OCI-LY7 (cell line): ENCODE measurements at regions of chr3 and their contacts with region 1.

Region 1: GRCh38 chr3:196073188-196073838 is 8.6 kb downstream of the TFRC start:
- DNase-seq: peak; percentile 76
- H3K4me3 ChIP-seq: no peak overlapping the region
- H3K27ac ChIP-seq: no peak overlapping the region
- H3K4me1 ChIP-seq: no peaks in the 10 kb centered on the region
- CTCF ChIP-seq: peak; percentile 90

Region 2: DNA sequence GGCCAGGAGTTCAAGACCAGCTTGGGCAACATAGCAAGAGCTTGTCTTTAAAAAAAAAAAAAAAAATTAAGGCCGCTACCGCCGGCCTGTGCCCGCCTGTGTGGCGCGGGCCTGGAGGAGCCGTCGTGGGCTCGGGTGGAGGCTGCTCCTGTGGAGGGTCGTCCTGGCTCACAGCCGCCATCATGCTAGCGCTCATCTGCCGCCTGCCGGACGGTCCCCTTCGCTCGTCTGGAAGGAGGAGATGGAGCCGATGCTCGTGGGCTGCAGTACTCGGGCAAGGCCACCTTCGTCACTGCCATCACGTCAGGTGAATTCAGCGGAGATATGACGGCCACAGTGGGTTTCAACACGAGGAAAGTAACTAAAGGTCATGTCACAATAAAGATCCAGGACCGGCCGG is 28.8 kb before region 1 on chr3:
- CTCF ChIA-PET with region 1: no interaction called
- POLR2A ChIA-PET with region 1: no interaction called
- intact Hi-C with region 1: no loop called
- DNase-seq: no peak
- H3K4me3 ChIP-seq: no peak overlapping the region
- H3K27ac ChIP-seq: no peak overlapping the region
- H3K4me1 ChIP-seq: no peaks in the 10 kb centered on the region
- CTCF ChIP-seq: no peak

Region 3: GRCh38 chr3:196179380-196180308 is 106.3 kb after region 1 on chr3:
- CTCF ChIA-PET with region 1: interaction called, 5 read pairs
- POLR2A ChIA-PET with region 1: interaction called, 11 read pairs
- intact Hi-C with region 1: no loop called
- DNase-seq: peak; percentile 75
- H3K4me3 ChIP-seq: peak overlapping the region; percentile 5
- H3K27ac ChIP-seq: peak overlapping the region; percentile 53
- H3K4me1 ChIP-seq: peaks cover 21% of the 10 kb centered on the region
- CTCF ChIP-seq: peak; percentile 47; the same call in 1 of the 2 replicates

Region 4: DNA sequence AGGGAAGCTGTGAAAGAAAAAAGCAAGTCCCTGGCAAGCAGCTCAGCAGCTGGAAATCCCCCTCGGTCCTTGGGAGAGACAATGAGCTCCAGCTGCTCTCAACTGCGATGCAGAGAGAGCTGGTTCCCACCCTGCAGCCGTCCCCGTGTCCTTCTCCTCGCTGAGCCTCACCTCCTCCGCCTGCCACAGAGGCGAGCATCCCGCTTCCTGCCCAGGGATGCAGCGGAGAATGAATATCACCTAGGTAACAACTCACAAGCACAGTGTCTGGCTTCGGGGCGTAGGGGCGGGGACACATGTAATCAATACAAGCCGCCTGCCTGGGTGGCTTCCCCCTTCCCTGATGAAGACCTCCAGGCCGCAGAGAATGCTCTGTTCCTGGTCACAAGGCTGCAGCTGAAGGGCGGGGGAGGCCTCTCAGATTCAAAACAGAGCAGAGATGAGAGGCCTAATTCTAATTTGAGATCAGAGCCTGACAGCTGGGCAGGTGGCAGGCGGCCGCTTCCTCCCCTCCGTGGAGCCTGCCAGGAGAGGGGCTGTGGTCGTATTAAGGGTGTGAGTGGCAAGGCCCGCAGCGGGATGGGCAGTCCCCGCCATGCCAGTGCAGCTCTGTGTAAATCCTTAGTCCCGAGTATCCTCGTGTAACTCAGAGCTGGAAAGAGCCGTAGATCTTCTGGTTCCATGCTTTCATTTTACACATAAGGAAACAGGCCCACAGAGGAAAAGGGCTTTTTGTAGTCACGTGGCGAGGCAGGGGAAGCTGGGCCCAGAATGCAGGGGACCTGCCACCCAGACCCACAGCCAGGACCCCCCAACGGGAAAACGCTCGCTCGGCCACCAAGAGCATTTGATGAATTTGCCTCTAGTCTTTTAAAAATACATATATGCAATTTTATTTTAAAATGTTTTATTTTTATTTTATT is 113.6 kb after region 1 on chr3:
- CTCF ChIA-PET with region 1: interaction called, 5 read pairs
- POLR2A ChIA-PET with region 1: interaction called, 11 read pairs
- intact Hi-C with region 1: no loop called
- DNase-seq: peak; percentile 68
- H3K4me3 ChIP-seq: peak overlapping the region; percentile 50
- H3K27ac ChIP-seq: peak overlapping the region; percentile 43
- H3K4me1 ChIP-seq: peaks cover 15% of the 10 kb centered on the region
- CTCF ChIP-seq: no peak

Region 5: GRCh38 chr3:196195664-196196265 is 122.5 kb after region 1 on chr3:
- CTCF ChIA-PET with region 1: interaction called, 5 read pairs
- POLR2A ChIA-PET with region 1: no interaction called
- intact Hi-C with region 1: loop called (anchors 1 kb)
- DNase-seq: no peak
- H3K4me3 ChIP-seq: no peak overlapping the region
- H3K27ac ChIP-seq: no peak overlapping the region
- H3K4me1 ChIP-seq: no peaks in the 10 kb centered on the region
- CTCF ChIP-seq: no peak